ENCODE measurements at regions of chr17 and their contacts with region 1.

Region 1: DNA sequence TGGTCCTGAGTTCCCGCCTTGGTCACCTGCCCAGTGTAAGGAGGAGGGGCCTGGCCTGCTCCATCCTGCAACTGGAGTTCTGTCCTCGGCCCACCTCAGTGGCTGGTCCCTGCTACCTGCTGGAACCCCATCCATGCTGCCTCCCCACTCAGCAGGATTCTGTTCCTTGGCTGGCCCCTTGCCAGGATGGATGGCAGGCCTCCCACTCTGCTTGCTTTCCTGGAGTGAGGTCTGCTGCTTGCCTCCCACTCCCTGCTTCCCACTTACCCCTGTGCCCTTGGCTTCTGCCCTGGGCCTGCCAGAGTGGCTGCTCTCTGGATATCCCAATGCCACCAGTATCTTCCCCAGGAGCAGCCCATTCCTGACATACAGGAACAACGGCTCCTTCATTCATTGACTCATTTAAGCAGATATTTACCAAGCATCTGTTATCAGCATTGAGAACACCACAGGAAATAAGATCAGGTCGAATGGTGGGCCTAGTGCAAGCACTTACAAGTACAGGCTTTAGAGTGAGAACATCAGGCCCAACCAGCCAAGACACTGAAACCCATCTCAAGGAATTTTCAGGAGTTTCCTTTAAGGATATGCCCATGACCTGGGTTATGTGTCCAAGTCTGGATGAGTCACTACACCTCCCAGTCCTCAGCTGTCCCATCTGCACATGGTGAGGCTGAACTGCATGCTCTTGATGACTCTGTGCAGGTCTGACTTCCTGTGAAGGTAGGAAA is 17.0 kb upstream of the RPRML start:
- DNase-seq: no peak
- ATAC-seq: no peak; the same call in 2 of the 3 replicates
- H3K4me3 ChIP-seq: no peak overlapping the region
- H3K27ac ChIP-seq: no peak overlapping the region
- H3K4me1 ChIP-seq: no peaks in the 10 kb centered on the region
- H3K27me3 ChIP-seq: peaks cover 4 to 7% of the 10 kb centered on the region in 2 experiments; a peak in 2 of 5 replicates
- CTCF ChIP-seq: no peak
- EP300 ChIP-seq: no peak
- POLR2A ChIP-seq: no peak
- RAD21 ChIP-seq: no peak

Region 2: GRCh38 chr17:46841561-46842379 is 154.2 kb before region 1 on chr17:
- CTCF ChIA-PET with region 1: interaction called, 9 read pairs
- POLR2A ChIA-PET with region 1: no interaction called
- in situ Hi-C with region 1: no loop called
- intact Hi-C with region 1: loop called (anchors 1 kb)
- DNase-seq: no peak
- ATAC-seq: peak; percentile 92
- H3K4me3 ChIP-seq: peak overlapping the region in 2 of 3 experiments; percentile 12 to 68; a peak in 2 of 6 replicates
- H3K27ac ChIP-seq: no peak overlapping the region
- H3K4me1 ChIP-seq: peaks cover 22% of the 10 kb centered on the region
- H3K27me3 ChIP-seq: peaks cover 0 to 10% of the 10 kb centered on the region in 2 experiments; a peak in 3 of 5 replicates
- CTCF ChIP-seq: peak; percentile 95
- EP300 ChIP-seq: no peak
- POLR2A ChIP-seq: no peak
- RAD21 ChIP-seq: peak; percentile 97

Region 3: DNA sequence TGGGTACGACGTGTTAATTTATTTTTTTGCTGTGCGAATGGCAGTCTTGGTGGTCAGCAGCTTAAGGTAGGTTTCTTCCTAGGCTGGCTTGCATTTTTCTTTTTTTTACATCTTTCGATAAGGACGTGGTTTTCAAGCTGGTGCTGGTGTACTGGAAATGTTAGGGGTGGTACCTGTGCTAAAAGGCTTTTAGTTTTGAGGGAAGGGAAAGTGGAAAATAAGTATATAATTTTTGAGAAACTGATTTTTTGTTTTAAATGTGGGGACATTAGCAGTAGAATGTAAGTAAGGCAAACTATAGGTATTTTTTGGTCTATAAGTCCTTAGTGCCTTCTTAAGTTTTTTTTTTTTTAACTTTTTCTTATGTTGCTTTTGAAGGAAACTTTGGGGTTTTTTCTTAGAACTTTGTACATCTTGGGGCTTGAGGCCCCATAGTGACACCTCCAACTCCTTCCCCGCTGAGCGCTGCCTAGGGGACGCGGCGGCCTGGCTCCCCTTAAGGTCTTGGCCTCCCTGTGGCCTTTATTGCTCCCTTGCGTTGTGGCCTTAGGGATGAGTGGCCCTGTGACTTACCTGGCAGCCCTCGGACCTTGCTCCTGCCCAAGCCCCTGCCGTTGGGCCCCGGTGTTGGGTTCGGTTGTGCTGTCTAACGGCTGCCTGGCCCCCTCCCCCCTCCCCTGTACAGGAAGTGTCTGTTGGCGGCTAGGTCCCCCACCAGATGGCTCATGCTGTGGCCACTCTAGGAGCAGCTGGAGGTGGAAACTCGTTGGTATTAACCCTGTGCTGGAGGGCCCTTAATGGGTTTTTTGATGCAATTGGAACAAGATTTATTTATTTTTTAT is 71.1 kb after region 1 on chr17:
- CTCF ChIA-PET with region 1: no interaction called
- POLR2A ChIA-PET with region 1: no interaction called
- in situ Hi-C with region 1: no loop called
- intact Hi-C with region 1: loop called (anchors 2 kb)
- DNase-seq: peak; percentile 95
- ATAC-seq: peak; percentile 99
- H3K4me3 ChIP-seq: peak overlapping the region; percentile 75 to 78 (median 76)
- H3K27ac ChIP-seq: peak overlapping the region; percentile 95
- H3K4me1 ChIP-seq: peaks cover 10% of the 10 kb centered on the region
- H3K27me3 ChIP-seq: no peaks in the 10 kb centered on the region; a peak in 1 of 5 replicates
- CTCF ChIP-seq: peak; percentile 65
- EP300 ChIP-seq: peak; percentile 70 to 83; a peak in 3 of 4 replicates
- POLR2A ChIP-seq: peak; percentile 97 to 98
- RAD21 ChIP-seq: peak; percentile 78